CD8-positive, alpha-beta memory T cell (primary cell): ENCODE measurements at regions of chr19 and their contacts with region 1.

Region 1: DNA sequence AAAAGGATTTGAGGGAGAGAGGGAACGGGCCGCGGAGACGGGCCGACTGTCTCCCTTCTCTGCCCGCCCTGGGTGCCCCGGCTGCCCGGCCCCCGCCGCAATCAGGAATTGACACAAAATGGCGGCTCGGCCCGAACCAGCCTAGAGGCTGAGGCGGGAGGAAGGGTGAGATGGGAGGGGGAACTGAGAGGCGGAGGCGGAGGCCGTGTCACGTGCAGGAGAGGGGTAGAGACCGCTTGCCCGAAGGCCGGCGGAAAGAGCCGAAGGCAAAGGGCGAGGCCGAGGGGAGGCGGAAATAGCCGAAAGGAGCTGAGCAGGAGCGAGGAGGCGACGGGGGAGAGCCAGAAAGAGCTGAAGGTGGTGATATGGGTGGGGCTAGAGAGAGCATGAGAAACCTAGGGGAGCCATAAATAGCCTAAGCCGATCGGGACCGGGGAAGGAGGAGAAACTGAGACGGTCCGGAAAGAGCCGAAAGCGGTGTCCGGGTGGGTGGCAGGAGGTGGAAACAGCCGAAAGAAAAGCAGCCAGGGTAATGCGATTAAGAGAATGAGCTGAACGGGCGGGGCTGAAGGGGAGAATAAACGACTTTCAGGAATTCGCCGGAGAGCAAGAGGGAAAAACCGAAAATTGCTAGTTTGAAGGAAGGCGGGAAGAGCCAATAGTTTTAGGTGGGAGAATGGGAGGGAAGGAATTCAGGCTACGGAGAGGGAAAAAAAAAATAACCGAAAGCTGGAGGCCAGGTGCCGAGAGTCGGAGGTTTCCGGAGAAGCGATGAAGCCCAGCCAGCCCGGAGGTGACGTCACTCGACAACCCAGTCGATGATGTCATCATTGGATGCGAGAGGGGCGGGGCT is at the start of gene ZC3H4:
- DNase-seq: peak; percentile 99 to 100 (median 100)
- H3K4me3 ChIP-seq: peak within 1 kb of the TSS; percentile 84
- H3K4me3 Mint-ChIP-seq: peak within 1 kb of the TSS; percentile 95 to 100 (median 97)
- H3K27ac ChIP-seq: peak within 1 kb of the TSS; percentile 99
- H3K27ac Mint-ChIP-seq: peak within 1 kb of the TSS; percentile 99 to 100 (median 100)
- H3K4me1 ChIP-seq: peaks cover 30% of the 10 kb centered on the region
- H3K4me1 Mint-ChIP-seq: peaks cover 32 to 35% (median 34%) of the 10 kb centered on the region in 3 donors
- H3K27me3 ChIP-seq: no peaks in the 10 kb centered on the region
- H3K27me3 Mint-ChIP-seq: no peaks in the 10 kb centered on the region
- total RNA-seq, gene ZC3H4: 90.3 to 99.6 TPM

Region 2: DNA sequence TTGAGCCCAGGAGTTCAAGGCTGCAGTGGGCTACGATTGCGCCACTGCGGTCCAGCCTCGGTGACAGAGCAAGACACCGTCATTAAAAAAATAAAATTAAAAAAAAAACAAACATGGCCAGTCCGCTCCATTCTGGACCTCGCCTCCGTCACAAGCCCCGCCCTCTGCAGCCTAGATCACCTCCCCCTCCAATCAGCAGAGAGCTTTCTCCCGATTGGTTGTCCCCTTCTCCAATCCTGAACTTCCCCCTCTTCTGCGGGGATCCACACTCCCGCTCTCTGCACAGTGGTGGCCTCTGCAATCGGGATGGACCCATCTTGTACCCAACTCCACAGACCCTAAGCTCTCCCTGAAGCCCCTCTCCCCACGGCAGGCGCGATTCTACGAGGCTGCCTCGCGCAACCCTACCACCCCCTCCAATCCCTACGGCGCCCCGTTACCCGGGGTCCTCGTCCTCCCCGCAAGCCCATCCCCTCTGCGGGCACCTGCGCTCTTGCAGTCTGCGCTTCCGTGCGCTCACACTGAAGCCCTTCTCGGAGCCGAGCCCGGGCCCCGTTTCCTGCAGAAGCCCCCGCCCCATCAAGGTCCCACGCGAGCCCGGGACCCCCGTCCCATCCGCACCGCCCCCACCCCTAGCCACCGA is 65.3 kb before region 1 on chr19:
- CTCF ChIA-PET with region 1: interaction called, 3 read pairs
- POLR2A ChIA-PET with region 1: interaction called, 13 read pairs
- DNase-seq: peak; percentile 55 to 73 (median 68)
- H3K4me3 ChIP-seq: peak overlapping the region; percentile 83
- H3K4me3 Mint-ChIP-seq: peak overlapping the region; percentile 87 to 98 (median 96)
- H3K27ac ChIP-seq: peak overlapping the region; percentile 64
- H3K27ac Mint-ChIP-seq: peak overlapping the region; percentile 37 to 97 (median 92)
- H3K4me1 ChIP-seq: peaks cover 14% of the 10 kb centered on the region
- H3K4me1 Mint-ChIP-seq: peaks cover 11 to 20% (median 16%) of the 10 kb centered on the region in 3 donors
- H3K27me3 ChIP-seq: no peaks in the 10 kb centered on the region
- H3K27me3 Mint-ChIP-seq: no peaks in the 10 kb centered on the region

Region 3: DNA sequence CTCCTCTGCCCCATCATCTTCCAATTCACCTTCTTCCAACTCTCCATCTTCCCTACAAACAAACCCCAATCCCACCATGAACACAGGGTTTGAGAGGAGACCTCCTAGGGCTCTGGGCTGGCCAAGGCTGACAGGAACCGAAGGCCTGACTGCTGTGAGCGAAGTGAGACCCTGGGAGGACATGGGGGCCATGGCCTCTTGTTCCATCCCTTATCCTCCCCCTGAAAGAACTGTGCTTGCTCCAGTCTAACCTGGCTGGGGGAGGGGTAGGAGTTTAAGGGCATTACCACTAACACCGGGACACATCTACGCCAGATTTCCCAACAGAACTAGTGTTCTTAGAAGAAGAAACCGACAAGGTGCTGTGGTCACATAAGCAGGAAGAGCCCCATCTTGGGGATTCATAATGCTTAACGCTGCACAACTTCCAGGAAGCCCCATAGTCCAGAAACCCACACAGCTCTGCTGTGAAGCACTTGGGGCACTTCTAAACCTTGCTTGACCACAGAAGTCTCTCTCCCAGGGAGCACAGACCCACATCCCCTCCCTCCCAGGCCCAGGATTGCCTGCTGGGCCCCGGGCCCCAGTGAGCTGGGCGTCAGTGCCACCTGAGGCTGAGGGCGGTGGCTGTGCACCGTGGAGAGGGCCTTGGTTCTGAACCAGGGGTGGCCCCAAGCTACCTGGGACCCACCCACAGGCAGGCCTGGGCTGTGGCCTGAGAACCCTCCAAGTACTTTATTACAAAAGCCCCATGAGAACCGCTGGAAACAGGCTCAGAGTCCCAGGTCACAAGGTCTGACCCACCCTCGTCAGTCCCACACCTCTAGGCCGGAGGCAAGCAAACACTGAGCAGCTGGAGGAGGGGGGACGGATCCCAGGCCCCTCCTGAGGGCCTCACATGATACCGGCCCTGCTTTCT is 18.4 kb before region 1 on chr19:
- CTCF ChIA-PET with region 1: interaction called, 16 read pairs
- POLR2A ChIA-PET with region 1: interaction called, 24 read pairs
- DNase-seq: peak in 2 of 5 donors; percentile 21 to 34
- H3K4me3 ChIP-seq: peak overlapping the region; percentile 6
- H3K4me3 Mint-ChIP-seq: peak overlapping the region in 6 of 7 donors; percentile 32 to 82 (median 74)
- H3K27ac ChIP-seq: peak overlapping the region; percentile 64
- H3K27ac Mint-ChIP-seq: peak overlapping the region; percentile 88 to 98 (median 92)
- H3K4me1 ChIP-seq: peaks cover 28% of the 10 kb centered on the region
- H3K4me1 Mint-ChIP-seq: peaks cover 42 to 57% (median 53%) of the 10 kb centered on the region in 3 donors
- H3K27me3 ChIP-seq: no peaks in the 10 kb centered on the region
- H3K27me3 Mint-ChIP-seq: no peaks in the 10 kb centered on the region

Region 4: GRCh38 chr19:47130591-47131227 is 17.5 kb after region 1 on chr19 and contains the start of gene SAE1:
- CTCF ChIA-PET with region 1: interaction called, 17 read pairs
- POLR2A ChIA-PET with region 1: interaction called, 14 read pairs
- DNase-seq: peak; percentile 85 to 94 (median 89)
- H3K4me3 ChIP-seq: peak within 1 kb of the TSS; percentile 97
- H3K4me3 Mint-ChIP-seq: peak within 1 kb of the TSS; percentile 96 to 100 (median 98)
- H3K27ac ChIP-seq: peak within 1 kb of the TSS; percentile 90
- H3K27ac Mint-ChIP-seq: peak within 1 kb of the TSS; percentile 74 to 99 (median 96)
- H3K4me1 ChIP-seq: peaks cover 33% of the 10 kb centered on the region
- H3K4me1 Mint-ChIP-seq: peaks cover 39 to 57% (median 52%) of the 10 kb centered on the region in 3 donors
- H3K27me3 ChIP-seq: no peaks in the 10 kb centered on the region
- H3K27me3 Mint-ChIP-seq: peaks cover 0 to 8% of the 10 kb centered on the region in 2 donors
- total RNA-seq, gene SAE1: 167 to 172 TPM

Region 5: GRCh38 chr19:47225746-47226425 is 112.7 kb after region 1 on chr19:
- CTCF ChIA-PET with region 1: no interaction called
- POLR2A ChIA-PET with region 1: interaction called, 16 read pairs
- DNase-seq: peak; percentile 85 to 92 (median 86)
- H3K4me3 ChIP-seq: peak overlapping the region; percentile 74
- H3K4me3 Mint-ChIP-seq: peak overlapping the region; percentile 11 to 92 (median 62)
- H3K27ac ChIP-seq: peak overlapping the region; percentile 94
- H3K27ac Mint-ChIP-seq: peak overlapping the region; percentile 71 to 95 (median 90)
- H3K4me1 ChIP-seq: peaks cover 36% of the 10 kb centered on the region
- H3K4me1 Mint-ChIP-seq: peaks cover 6 to 20% (median 16%) of the 10 kb centered on the region in 3 donors
- H3K27me3 ChIP-seq: no peaks in the 10 kb centered on the region
- H3K27me3 Mint-ChIP-seq: no peaks in the 10 kb centered on the region

Region 6: GRCh38 chr19:47273313-47273977 is 160.2 kb after region 1 on chr19:
- CTCF ChIA-PET with region 1: no interaction called
- POLR2A ChIA-PET with region 1: interaction called, 21 read pairs
- DNase-seq: peak; percentile 82 to 92 (median 86)
- H3K4me3 ChIP-seq: peak overlapping the region; percentile 93
- H3K4me3 Mint-ChIP-seq: peak overlapping the region; percentile 96 to 99 (median 97)
- H3K27ac ChIP-seq: peak overlapping the region; percentile 97
- H3K27ac Mint-ChIP-seq: peak overlapping the region; percentile 97 to 100 (median 98)
- H3K4me1 ChIP-seq: peaks cover 15% of the 10 kb centered on the region
- H3K4me1 Mint-ChIP-seq: peaks cover 18 to 28% (median 24%) of the 10 kb centered on the region in 3 donors
- H3K27me3 ChIP-seq: no peaks in the 10 kb centered on the region
- H3K27me3 Mint-ChIP-seq: no peaks in the 10 kb centered on the region